Psoas muscle (tissue), 8 donors: ENCODE measurements at regions of chrX and their contacts with region 1.

Region 1: DNA sequence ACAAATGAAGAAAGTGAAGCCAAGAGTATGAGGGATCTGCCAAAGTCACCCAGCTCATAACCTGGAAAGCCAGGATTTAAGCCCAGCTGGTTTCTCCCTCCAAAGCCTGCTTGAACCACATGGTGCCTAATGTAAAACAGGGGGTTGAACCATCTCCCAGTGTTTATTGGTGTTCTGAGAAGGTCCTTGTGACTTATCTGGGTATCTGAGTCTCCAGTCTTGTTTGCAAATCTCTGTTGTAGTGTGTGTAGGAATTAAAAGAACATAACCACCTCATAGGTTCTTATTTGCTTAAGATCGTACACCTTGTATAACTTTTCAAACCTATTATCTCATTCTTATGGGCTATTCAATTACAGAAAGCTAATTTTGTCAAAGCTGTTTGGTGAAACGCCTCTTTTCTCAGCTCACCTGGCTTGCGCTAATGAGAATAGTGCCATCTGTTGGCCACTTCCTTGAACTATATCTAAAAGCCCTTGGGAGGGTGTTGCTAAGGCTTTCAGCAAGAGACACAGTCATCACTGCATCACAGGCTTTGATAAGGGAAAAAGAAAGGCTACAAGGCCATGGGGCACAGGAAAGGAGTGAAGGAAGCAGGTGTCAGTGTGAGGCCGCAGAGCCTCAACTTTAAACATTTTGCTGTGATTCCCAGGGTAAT is 34.0 kb downstream of the ETDB start:
- DNase-seq: no peak
- ATAC-seq: peak; percentile 64 to 91 (median 78)
- H3K4me3 ChIP-seq: no peak overlapping the region
- H3K27ac ChIP-seq: no peak overlapping the region
- H3K4me1 ChIP-seq: no peaks in the 10 kb centered on the region
- H3K27me3 ChIP-seq: no peaks in the 10 kb centered on the region
- CTCF ChIP-seq: peak; percentile 62

Region 2: GRCh38 chrX:134969726-134970125 is 116.6 kb before region 1 on chrX:
- intact Hi-C with region 1: loop called (anchors 2 kb)
- DNase-seq: no peak
- ATAC-seq: no peak
- H3K4me3 ChIP-seq: no peak overlapping the region
- H3K27ac ChIP-seq: no peak overlapping the region
- H3K4me1 ChIP-seq: no peaks in the 10 kb centered on the region
- H3K27me3 ChIP-seq: no peaks in the 10 kb centered on the region
- CTCF ChIP-seq: no peak

Region 3: DNA sequence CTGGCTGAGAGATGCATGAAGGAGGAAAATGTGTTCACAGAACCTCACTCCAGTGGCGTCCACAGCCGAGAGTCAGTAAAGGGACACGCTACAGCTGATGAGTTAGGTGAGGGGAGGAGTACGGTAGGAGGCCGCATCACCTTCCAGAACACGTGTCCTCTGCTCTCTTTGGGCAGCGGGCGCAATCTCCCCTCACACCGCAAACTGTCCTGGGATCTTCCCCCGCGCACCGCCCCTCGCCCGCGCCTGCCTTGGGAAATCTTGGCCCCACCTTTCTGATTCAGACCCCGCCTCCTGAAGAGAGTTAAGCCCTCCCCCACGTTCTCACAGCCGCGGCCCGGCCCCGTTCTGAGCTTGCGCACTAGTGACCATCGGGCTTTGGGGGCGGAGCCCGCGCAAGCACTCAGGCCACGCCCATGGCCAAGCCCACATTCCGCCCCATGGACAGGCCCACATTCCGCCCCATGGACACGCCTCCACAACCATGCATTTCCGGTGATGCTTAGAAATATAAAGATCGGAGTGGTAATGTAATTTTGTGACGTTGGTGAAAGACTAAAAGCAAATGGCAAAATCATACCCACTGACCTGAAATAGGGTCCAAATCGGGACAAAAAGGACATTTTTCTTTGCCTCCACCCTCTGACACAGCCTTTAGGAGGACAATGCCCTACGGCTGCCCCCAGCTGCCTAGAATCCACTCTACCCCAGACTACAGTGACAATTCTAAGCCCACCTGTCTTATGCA is 82.3 kb before region 1 on chrX:
- intact Hi-C with region 1: no loop called
- DNase-seq: peak; percentile 88 to 94
- ATAC-seq: peak; percentile 97 to 100 (median 98)
- H3K4me3 ChIP-seq: peak overlapping the region; percentile 61
- H3K27ac ChIP-seq: peak overlapping the region; percentile 30
- H3K4me1 ChIP-seq: no peaks in the 10 kb centered on the region
- H3K27me3 ChIP-seq: peaks cover 0 to 6% (median 0%) of the 10 kb centered on the region in 3 donors
- CTCF ChIP-seq: no peak